Endothelial cell of umbilical vein (primary cell): ENCODE measurements at regions of chr7 and their contacts with region 1.

Region 1: GRCh38 chr7:35185907-35186731 is 67.8 kb downstream of the TBX20 start:
- DNase-seq: peak; percentile 24
- H3K4me3 ChIP-seq: peak overlapping the region; percentile 8 to 34 (median 11)
- H3K27ac ChIP-seq: no peak overlapping the region
- H3K4me1 ChIP-seq: peaks cover 8% of the 10 kb centered on the region
- H3K27me3 ChIP-seq: peaks cover 7 to 17% of the 10 kb centered on the region in 2 experiments
- CTCF ChIP-seq: no peak
- POLR2A ChIP-seq: no peak

Region 2: DNA sequence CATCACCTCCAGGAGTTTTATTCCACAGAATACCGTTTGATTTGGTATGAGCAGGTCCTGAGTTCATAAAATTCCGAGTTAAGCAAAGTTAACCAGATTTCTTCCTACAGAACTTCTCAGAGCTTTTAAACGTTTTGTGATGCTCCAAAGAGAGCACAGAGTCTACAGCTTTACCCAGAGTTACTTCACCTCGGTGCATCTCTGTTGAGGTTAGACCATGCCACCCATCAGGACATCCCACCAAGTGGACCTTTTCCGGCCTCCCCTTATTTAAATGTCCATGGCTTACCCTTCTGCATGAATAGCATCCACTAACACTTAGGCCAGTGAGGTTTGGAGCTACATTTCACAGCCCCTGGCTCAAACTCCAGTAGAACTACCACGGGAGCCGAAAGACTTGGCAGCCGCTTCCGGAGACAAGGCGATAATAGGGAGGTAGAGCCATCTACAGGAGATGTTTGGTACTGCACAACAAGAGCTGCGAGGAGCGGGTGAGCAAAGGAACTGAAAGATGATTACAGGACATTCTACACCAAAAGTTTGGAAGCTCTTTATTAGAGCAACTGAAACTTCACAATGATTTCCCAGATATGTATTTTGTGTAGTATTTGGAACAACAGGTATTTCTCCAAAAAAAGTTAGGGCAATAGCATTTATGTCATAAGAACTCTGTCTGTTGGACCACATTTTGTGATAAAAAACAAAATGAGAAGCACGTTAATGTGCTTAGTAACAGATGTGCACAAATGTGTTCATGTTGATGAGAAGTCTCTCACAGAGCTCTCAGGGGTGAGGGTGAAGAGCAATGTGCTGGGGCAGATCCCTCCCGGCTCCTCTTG is 334.1 kb after region 1 on chr7:
- CTCF ChIA-PET with region 1: interaction called, 5 read pairs
- POLR2A ChIA-PET with region 1: no interaction called
- dilution Hi-C with region 1: no loop called
- intact Hi-C with region 1: loop called (anchors 5 kb)
- DNase-seq: peak; percentile 46
- H3K4me3 ChIP-seq: no peak overlapping the region
- H3K27ac ChIP-seq: no peak overlapping the region
- H3K4me1 ChIP-seq: no peaks in the 10 kb centered on the region
- H3K27me3 ChIP-seq: peaks cover 4 to 15% of the 10 kb centered on the region in 2 experiments
- CTCF ChIP-seq: peak; percentile 68 to 74
- POLR2A ChIP-seq: no peak